ENCODE measurements at regions of chr21 and their contacts with region 1.

Region 1: GRCh38 chr21:41535819-41536640 is 28.1 kb upstream of the TMPRSS2 start:
- DNase-seq: no peak
- H3K4me3 ChIP-seq: no peak overlapping the region
- H3K27ac ChIP-seq: no peak overlapping the region
- H3K4me1 ChIP-seq: no peaks in the 10 kb centered on the region
- H3K27me3 ChIP-seq: peaks cover 0 to 41% of the 10 kb centered on the region in 2 donors
- CTCF ChIP-seq: no peak

Region 2: GRCh38 chr21:41016472-41016871 is 519.6 kb before region 1 on chr21:
- intact Hi-C with region 1: no loop called
- DNase-seq: no peak
- H3K4me3 ChIP-seq: no peak overlapping the region
- H3K27ac ChIP-seq: no peak overlapping the region
- H3K4me1 ChIP-seq: no peaks in the 10 kb centered on the region
- H3K27me3 ChIP-seq: no peaks in the 10 kb centered on the region
- CTCF ChIP-seq: no peak

Region 3: DNA sequence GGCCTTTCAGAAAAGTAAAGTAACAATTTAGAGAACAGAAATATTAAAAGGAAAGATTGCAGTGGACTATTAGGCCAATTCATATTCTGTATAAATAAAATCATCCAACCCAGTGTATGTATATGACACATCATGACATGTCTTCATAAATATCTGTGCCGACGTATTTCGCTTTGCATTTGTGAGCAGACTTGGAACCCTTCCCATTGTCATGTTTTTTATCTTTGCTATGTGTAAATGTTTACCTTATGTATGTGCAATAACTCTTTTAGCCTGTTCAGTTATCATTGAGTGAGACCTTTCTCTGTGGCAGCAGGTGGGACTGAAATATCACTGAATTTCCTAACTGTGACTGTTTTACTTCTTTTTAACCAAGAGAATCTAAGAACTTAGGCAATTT is 277.4 kb before region 1 on chr21:
- intact Hi-C with region 1: no loop called
- DNase-seq: no peak
- H3K4me3 ChIP-seq: no peak overlapping the region
- H3K27ac ChIP-seq: no peak overlapping the region
- H3K4me1 ChIP-seq: no peaks in the 10 kb centered on the region
- H3K27me3 ChIP-seq: no peaks in the 10 kb centered on the region
- CTCF ChIP-seq: no peak

Region 4: DNA sequence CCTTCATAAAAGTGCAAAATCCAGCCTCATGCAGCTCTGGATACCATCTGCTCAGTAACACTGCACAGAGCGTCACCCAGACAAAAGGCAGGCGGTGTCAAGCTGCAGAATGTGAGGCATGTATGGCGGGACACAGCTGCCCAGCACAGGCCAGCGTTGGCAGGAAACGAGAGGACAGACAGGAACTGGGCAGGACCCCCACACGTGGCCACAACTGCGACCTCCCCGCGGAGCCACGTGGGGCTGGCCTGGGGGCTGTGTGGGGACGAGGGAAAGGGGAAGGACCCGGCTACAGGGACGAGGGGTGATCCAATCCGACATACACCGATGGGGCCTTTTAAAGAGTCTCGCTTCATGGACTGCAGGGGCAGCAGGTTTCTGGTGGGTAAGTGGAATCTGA is 208.5 kb after region 1 on chr21:
- intact Hi-C with region 1: no loop called
- DNase-seq: no peak
- H3K4me3 ChIP-seq: no peak overlapping the region
- H3K27ac ChIP-seq: no peak overlapping the region
- H3K4me1 ChIP-seq: no peaks in the 10 kb centered on the region
- H3K27me3 ChIP-seq: no peaks in the 10 kb centered on the region
- CTCF ChIP-seq: no peak

Region 5: DNA sequence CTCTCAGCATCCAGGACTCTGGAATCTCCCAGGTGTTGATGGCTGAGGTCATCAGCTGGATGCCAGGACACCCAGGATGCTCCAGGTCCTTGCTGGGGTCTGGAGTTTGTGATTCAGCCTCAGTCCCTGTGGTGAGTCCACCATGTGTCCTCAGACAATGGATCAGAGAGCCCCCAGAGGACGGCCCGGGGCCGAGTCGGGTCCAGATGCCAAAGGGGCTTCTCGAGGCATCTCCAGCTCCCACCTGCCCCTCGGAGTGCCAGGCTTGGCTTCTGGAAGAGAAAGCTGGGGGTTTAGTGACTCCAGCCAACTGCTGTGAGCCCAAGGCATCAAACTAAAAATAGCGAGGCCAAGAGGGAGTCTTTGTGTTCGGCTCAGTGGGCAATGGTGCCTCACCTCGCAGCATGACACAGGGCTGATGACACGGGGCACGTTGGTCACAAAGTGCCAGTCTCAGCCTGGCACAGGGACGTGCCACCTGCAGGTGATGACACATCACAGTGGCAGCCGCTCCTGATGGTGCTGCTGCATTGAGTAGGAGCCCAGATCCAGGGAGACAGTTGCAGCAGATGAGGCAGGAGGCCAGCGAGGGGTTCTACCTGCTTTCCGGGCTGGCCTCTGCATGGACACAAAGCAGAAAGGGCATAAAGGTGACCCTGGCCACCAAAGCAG is 1128.0 kb after region 1 on chr21:
- intact Hi-C with region 1: loop called (anchors 5 kb)
- DNase-seq: no peak
- H3K4me3 ChIP-seq: no peak overlapping the region
- H3K27ac ChIP-seq: no peak overlapping the region
- H3K4me1 ChIP-seq: no peaks in the 10 kb centered on the region
- H3K27me3 ChIP-seq: peaks cover 0 to 46% of the 10 kb centered on the region in 2 donors
- CTCF ChIP-seq: no peak

Measured in tibial artery (tissue), 4 donors.